ENCODE measurements at regions of chr17 and their contacts with region 1.

Region 1: GRCh38 chr17:4625181-4625617 is 16.3 kb downstream of the ALOX15 start:
- DNase-seq: no peak
- H3K4me3 ChIP-seq: no peak overlapping the region
- H3K27ac ChIP-seq: no peak overlapping the region
- H3K4me1 ChIP-seq: no peaks in the 10 kb centered on the region
- H3K27me3 ChIP-seq: no peaks in the 10 kb centered on the region
- CTCF ChIP-seq: no peak

Region 2: DNA sequence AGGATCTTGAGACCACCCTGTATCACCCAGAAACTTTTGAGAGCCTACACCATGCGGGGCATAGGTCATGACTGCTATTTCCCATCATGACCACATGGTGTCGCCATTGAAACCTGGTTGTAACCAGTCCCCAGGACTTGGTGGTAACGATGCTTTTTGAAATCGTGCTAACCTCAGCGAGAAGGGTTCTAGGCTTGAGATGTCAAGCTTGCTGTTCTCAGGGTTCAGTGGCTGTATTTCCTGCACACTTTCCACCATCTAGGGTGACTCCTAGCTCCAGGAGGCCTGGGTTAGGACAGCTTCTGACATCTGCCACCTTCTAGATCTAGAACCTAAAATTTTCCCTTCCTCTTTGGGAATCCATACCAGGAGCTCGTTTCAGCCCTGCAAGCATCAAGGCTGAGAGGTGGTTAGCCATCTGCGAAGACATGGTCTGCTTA is 204.5 kb before region 1 on chr17:
- CTCF ChIA-PET with region 1: no interaction called
- POLR2A ChIA-PET with region 1: no interaction called
- intact Hi-C with region 1: loop called (anchors 5 kb)
- DNase-seq: peak; percentile 80
- H3K4me3 ChIP-seq: no peak overlapping the region
- H3K27ac ChIP-seq: no peak overlapping the region
- H3K4me1 ChIP-seq: no peaks in the 10 kb centered on the region
- H3K27me3 ChIP-seq: no peaks in the 10 kb centered on the region
- CTCF ChIP-seq: peak; percentile 83

Region 3: DNA sequence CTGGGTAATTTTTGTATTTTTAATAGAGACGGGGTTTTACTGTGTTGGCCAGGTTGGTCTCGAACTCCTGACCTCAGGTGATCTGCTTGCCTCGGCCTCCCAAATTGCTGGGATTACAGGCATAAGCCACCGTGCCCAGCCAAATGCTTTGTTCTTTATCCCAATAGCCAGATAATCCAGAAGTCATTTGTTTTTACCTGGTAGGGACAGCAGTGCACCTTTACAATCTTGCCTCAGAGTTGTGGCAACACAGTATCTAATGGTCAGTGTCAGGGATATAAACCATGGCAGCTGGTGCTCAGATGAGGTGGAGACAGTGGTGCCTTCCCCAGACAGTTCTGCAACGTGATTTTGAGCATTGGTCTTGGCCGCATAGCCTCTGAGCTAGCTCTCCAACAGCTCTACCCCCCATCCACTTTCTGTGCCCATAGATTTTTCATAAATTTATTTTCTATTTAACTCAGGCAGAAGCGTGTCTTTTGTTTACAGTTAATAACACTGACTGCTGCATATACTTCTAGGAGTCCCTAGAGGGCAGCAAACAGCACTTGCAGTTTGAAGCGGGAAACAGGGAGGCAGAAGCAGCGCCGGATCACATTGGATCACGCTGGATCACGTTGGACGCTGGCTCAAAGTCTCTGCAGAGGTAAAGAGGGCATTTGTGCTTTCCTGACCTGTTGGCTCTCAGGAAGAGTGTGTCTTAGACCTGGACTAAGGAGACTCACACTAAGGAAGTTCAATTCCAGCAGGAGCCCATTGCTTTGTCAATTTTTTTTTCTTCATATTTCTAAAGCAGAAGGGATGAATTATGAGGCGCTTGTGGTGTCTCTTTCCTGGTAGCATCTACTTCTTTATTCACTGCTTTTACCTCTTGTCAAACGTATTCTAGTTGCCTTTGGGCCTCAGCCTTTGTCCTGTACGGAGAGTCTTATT is 59.7 kb before region 1 on chr17:
- CTCF ChIA-PET with region 1: interaction called, 25 read pairs
- POLR2A ChIA-PET with region 1: no interaction called
- intact Hi-C with region 1: loop called (anchors 1 kb)
- DNase-seq: peak; percentile 88
- H3K4me3 ChIP-seq: no peak overlapping the region
- H3K27ac ChIP-seq: no peak overlapping the region
- H3K4me1 ChIP-seq: no peaks in the 10 kb centered on the region
- H3K27me3 ChIP-seq: no peaks in the 10 kb centered on the region
- CTCF ChIP-seq: peak; percentile 92

Region 4: DNA sequence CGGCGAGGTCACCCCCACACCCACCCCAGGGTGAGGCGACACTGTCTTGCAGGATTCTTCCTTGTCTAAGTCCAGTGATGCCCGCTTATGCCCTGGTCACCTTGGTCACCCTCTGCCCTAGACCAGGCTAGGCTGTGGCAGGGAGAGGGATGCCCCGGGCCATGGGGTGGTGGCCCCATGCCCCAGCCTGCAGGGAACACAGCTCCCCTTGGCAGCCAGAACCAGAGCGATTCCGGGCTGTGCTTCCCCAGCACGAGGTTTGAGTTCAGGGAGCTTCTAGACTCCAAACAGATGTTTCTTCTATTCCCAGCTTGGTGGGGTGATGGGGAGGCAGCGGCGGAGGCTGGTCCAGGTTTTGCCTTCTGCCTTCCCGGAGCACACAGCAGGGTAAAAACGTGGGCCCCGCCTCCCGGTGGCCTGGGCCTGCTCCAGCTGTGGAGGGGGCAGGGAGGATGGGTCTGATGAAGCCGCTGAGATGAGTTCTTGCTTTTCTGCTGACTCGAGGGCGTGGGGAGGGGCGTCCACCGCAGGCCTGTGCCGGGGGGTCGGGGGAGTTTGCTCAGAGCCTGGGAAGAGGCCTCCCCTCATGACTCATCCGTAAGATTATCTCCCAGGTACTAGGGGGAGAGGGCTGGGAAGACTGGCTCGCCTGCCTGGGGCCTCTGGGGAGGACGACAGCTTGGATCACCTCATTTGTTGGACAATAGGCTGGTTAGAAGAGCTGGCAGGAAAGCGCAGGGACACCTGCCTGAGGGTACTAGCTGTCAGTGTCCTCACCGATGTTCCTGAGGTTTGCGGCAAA is 25.5 kb before region 1 on chr17:
- CTCF ChIA-PET with region 1: no interaction called
- POLR2A ChIA-PET with region 1: no interaction called
- intact Hi-C with region 1: no loop called
- DNase-seq: no peak
- H3K4me3 ChIP-seq: no peak overlapping the region
- H3K27ac ChIP-seq: no peak overlapping the region
- H3K4me1 ChIP-seq: peaks cover 8% of the 10 kb centered on the region
- H3K27me3 ChIP-seq: no peaks in the 10 kb centered on the region
- CTCF ChIP-seq: no peak

Measured in A673 (cell line).